ENCODE measurements at regions of chr16 and their contacts with region 1.

Region 1: GRCh38 chr16:9047686-9048301 is 43.6 kb upstream of the HAPSTR1 start:
- DNase-seq: peak; percentile 84
- ATAC-seq: peak; percentile 75
- H3K4me3 Mint-ChIP-seq: peak overlapping the region; percentile 41
- H3K27ac Mint-ChIP-seq: peak overlapping the region; percentile 74
- H3K4me1 Mint-ChIP-seq: peaks cover 43% of the 10 kb centered on the region
- H3K27me3 Mint-ChIP-seq: peaks cover 5% of the 10 kb centered on the region

Region 2: GRCh38 chr16:8430401-8430800 is 617.4 kb before region 1 on chr16:
- CTCF ChIA-PET with region 1: no interaction called
- POLR2A ChIA-PET with region 1: no interaction called
- intact Hi-C with region 1: no loop called
- DNase-seq: no peak
- ATAC-seq: no peak
- H3K4me3 Mint-ChIP-seq: no peak overlapping the region
- H3K27ac Mint-ChIP-seq: no peak overlapping the region
- H3K4me1 Mint-ChIP-seq: no peaks in the 10 kb centered on the region
- H3K27me3 Mint-ChIP-seq: no peaks in the 10 kb centered on the region

Region 3: GRCh38 chr16:9060225-9060624 is 12.4 kb after region 1 on chr16:
- CTCF ChIA-PET with region 1: interaction called, 12 read pairs
- POLR2A ChIA-PET with region 1: no interaction called
- intact Hi-C with region 1: no loop called
- DNase-seq: no peak
- ATAC-seq: no peak
- H3K4me3 Mint-ChIP-seq: no peak overlapping the region
- H3K27ac Mint-ChIP-seq: no peak overlapping the region
- H3K4me1 Mint-ChIP-seq: peaks cover 18% of the 10 kb centered on the region
- H3K27me3 Mint-ChIP-seq: peaks cover 2% of the 10 kb centered on the region

Region 4: GRCh38 chr16:9072806-9073341 is 25.1 kb after region 1 on chr16:
- CTCF ChIA-PET with region 1: interaction called, 6 read pairs
- POLR2A ChIA-PET with region 1: interaction called, 4 read pairs
- intact Hi-C with region 1: loop called (anchors 1 kb)
- DNase-seq: peak; percentile 72
- ATAC-seq: peak; percentile 69
- H3K4me3 Mint-ChIP-seq: peak overlapping the region; percentile 41
- H3K27ac Mint-ChIP-seq: peak overlapping the region; percentile 95
- H3K4me1 Mint-ChIP-seq: peaks cover 51% of the 10 kb centered on the region
- H3K27me3 Mint-ChIP-seq: no peaks in the 10 kb centered on the region

Region 5: DNA sequence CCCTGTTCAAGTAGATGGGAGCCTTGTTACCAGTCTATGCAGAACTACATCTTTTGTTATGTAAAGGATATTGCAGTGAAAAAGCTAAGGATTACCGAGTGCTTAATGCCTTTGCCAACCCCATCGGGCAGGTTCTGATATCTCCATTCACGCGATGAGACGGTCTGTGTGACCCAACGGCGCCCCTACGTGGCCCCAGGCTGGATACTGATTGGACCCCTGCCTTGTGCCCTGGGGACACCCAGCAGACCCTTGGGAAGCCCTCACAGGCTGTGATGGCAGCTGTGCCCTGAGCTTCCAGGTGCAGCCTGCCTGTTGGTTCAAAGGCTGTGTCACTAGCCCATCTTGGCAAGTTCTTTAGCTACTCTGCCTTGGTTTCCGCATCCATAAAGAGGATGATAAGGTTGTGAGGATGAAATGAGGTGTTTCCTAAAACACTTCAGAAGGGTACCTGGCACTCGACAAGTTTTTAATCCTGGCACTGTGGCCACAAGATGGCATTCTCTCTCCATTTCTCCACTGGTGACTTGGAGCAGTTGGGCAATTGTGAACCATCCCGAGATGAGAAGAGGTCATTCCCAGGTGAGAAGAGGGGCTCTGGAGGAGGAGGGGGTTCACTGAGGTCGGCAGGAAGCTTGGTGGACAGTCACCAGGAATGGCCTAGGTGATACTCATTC is 77.3 kb after region 1 on chr16:
- CTCF ChIA-PET with region 1: interaction called, 3 read pairs
- POLR2A ChIA-PET with region 1: interaction called, 3 read pairs
- intact Hi-C with region 1: loop called in 1 of 2 experiments (anchors 1 kb)
- DNase-seq: no peak
- ATAC-seq: no peak
- H3K4me3 Mint-ChIP-seq: no peak overlapping the region
- H3K27ac Mint-ChIP-seq: peak overlapping the region; percentile 55
- H3K4me1 Mint-ChIP-seq: peaks cover 66% of the 10 kb centered on the region
- H3K27me3 Mint-ChIP-seq: no peaks in the 10 kb centered on the region

Measured in activated CD4-positive, alpha-beta T cell treated with anti-CD3 and anti-CD28 coated beads for 36 hours (primary cell).